Ascending aorta (tissue), 2 donors: ENCODE measurements at regions of chr3 and their contacts with region 1.

Region 1: DNA sequence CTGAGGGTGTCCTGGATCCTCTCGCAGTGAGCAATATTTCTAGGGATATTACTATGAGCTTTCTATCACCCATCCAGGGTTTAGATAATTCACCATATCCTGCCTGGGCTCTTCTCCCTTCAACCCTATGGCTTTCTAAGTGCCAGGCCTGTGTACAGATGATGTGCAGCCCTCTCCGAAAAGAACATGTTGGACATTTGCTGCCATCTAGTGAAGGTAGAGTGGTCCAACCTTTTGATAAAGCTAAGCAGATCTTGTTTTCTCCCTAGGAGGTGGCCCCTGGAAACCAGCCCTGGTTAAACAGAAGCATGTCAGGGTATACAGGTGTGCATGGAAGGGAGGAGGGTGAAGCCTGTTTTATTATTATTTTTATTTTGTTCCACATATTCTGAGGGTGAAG is 27.9 kb upstream of the SCN10A start:
- DNase-seq: no peak
- H3K4me3 ChIP-seq: no peak overlapping the region
- H3K27ac ChIP-seq: no peak overlapping the region
- H3K4me1 ChIP-seq: no peaks in the 10 kb centered on the region
- H3K27me3 ChIP-seq: no peaks in the 10 kb centered on the region
- CTCF ChIP-seq: peak; percentile 22 to 47 (median 30)

Region 2: DNA sequence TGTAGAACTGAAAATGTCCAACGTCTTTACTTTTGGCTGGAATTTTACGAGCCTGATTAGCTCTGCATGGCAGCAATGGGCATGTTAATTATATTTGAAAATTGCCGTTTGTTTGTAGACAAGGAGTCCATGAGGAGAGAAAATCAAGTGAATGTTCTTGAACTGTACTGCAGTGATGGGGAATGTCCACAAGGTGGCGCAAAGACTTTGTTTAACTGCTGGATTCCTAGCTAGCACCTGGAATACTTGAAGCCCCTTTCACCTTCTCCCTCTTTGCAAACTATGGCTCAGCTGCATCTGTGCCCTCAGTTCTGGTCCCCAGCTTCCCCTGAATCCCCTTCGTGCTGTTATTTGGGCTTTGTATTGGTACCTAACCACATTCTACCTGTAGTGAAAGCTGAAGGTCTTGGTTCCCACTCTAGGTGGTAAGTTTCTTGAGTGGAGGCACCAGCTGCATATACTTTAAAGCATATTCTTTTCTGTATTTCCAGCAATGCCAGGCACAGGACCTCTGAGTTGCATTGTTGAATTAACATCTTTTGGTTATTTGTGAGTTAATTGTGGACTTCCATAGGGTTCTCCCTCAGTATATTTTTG is 322.4 kb before region 1 on chr3:
- intact Hi-C with region 1: loop called (anchors 1 kb)
- DNase-seq: peak in 1 of 2 donors; percentile 74
- H3K4me3 ChIP-seq: no peak overlapping the region
- H3K27ac ChIP-seq: no peak overlapping the region
- H3K4me1 ChIP-seq: no peaks in the 10 kb centered on the region
- H3K27me3 ChIP-seq: no peaks in the 10 kb centered on the region
- CTCF ChIP-seq: peak; percentile 62 to 87 (median 87)

Region 3: GRCh38 chr3:38651154-38651789 is 192.6 kb before region 1 on chr3:
- intact Hi-C with region 1: loop called (anchors 5 kb)
- DNase-seq: peak in 1 of 2 donors; percentile 65
- H3K4me3 ChIP-seq: no peak overlapping the region
- H3K27ac ChIP-seq: no peak overlapping the region
- H3K4me1 ChIP-seq: peaks cover 0 to 9% of the 10 kb centered on the region in 2 donors
- H3K27me3 ChIP-seq: no peaks in the 10 kb centered on the region
- CTCF ChIP-seq: peak; percentile 54 to 93 (median 90)

Region 4: GRCh38 chr3:38878646-38879045 is 34.7 kb after region 1 on chr3:
- intact Hi-C with region 1: no loop called
- DNase-seq: no peak
- H3K4me3 ChIP-seq: no peak overlapping the region
- H3K27ac ChIP-seq: no peak overlapping the region
- H3K4me1 ChIP-seq: no peaks in the 10 kb centered on the region
- H3K27me3 ChIP-seq: no peaks in the 10 kb centered on the region
- CTCF ChIP-seq: no peak